A549 (cell line): ENCODE measurements at regions of chr17 and their contacts with region 1.

Region 1: GRCh38 chr17:81440876-81441244 is 45.6 kb downstream of the BAHCC1 start:
- DNase-seq: peak; percentile 63 to 87
- ATAC-seq: peak; percentile 49 to 83; a peak in 5 of 6 replicates
- H3K4me3 ChIP-seq: no peak overlapping the region
- H3K27ac ChIP-seq: 0 out of 6 replicates have a peak overlapping the region, but pooled peaks of 1 of the 2 experiments have one; percentile 20
- H3K4me1 ChIP-seq: 0 out of 3 replicates have a peak, but pooled peaks cover 4% of the 10 kb centered on the region
- CTCF ChIP-seq: peak; percentile 60
- EP300 ChIP-seq: no peak
- POLR2A ChIP-seq: no peak
- RAD21 ChIP-seq: peak; percentile 56 to 69; a peak in 4 of 5 replicates

Region 2: GRCh38 chr17:81253358-81254131 is 187.3 kb before region 1 on chr17:
- CTCF ChIA-PET with region 1: interaction called, 14 read pairs
- POLR2A ChIA-PET with region 1: no interaction called
- DNase-seq: peak; percentile 43 to 62
- ATAC-seq: peak; percentile 12 to 47; a peak in 3 of 6 replicates
- H3K4me3 ChIP-seq: no peak overlapping the region
- H3K27ac ChIP-seq: no peak overlapping the region
- H3K4me1 ChIP-seq: peaks cover 18% of the 10 kb centered on the region
- CTCF ChIP-seq: peak; percentile 92
- EP300 ChIP-seq: no peak
- POLR2A ChIP-seq: no peak
- RAD21 ChIP-seq: peak; percentile 95 to 98

Region 3: GRCh38 chr17:81371910-81372760 is 68.7 kb before region 1 on chr17:
- CTCF ChIA-PET with region 1: interaction called, 23 read pairs
- POLR2A ChIA-PET with region 1: no interaction called
- DNase-seq: peak; percentile 73 to 77
- ATAC-seq: peak; percentile 91 to 95
- H3K4me3 ChIP-seq: no peak overlapping the region
- H3K27ac ChIP-seq: peak overlapping the region; percentile 19 to 36; a peak in 2 of 6 replicates
- H3K4me1 ChIP-seq: peaks cover 5% of the 10 kb centered on the region
- CTCF ChIP-seq: peak; percentile 55
- EP300 ChIP-seq: no peak
- POLR2A ChIP-seq: no peak
- RAD21 ChIP-seq: peak; percentile 69 to 71; a peak in 4 of 5 replicates

Region 4: GRCh38 chr17:81401723-81402529 is 38.9 kb before region 1 on chr17:
- CTCF ChIA-PET with region 1: interaction called, 42 read pairs
- POLR2A ChIA-PET with region 1: no interaction called
- DNase-seq: peak; percentile 69 to 81
- ATAC-seq: peak in 1 of 2 experiments; percentile 54; a peak in 3 of 6 replicates
- H3K4me3 ChIP-seq: no peak overlapping the region
- H3K27ac ChIP-seq: peak overlapping the region; percentile 16 to 98; a peak in 3 of 6 replicates
- H3K4me1 ChIP-seq: peaks cover 49% of the 10 kb centered on the region
- CTCF ChIP-seq: peak; percentile 55
- EP300 ChIP-seq: no peak
- POLR2A ChIP-seq: no peak
- RAD21 ChIP-seq: peak; percentile 64 to 67

Region 5: DNA sequence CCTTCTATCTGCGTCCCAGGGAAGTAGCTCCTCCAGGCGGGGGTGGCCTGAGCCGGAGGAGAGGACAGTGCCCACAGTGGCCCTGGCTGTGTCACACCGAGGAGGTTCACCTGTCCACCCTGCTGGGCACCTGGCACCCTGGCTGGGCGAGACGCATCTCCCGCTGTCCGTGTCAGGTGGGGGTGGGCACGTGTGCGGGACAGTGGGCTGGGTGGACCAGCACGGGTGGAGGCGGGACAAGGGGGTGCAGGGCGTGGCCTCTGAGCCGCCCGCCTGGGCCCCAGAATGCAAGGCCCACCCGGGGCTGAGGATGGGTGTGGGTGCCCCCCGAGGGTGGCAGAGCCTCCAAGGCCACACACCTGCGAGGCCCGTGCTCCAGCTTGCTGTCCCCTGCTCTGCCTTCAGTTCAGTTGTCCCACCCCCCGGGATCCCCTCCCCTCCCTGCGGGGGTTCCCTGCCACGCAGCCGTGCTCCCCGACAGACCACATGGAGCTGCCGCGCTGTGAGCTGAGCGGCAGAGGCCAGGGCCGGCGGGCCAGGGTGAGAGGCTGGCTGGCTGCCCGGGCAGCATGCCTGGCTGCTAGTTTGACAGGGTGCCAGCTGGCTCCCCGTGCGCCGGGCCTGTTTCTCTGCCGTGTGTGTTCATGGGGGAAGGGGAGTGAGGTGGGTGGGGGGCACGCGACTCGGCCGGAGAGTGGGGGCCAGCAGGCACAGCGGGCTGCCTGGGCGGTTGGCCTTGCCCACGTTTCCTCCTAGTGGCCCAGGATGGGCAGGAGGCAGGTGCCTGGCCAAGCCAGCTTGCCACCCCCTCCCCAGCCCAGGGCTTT is 11.7 kb before region 1 on chr17:
- CTCF ChIA-PET with region 1: interaction called, 36 read pairs
- POLR2A ChIA-PET with region 1: no interaction called
- DNase-seq: peak; percentile 64 to 80
- ATAC-seq: peak; percentile 49 to 77
- H3K4me3 ChIP-seq: no peak overlapping the region
- H3K27ac ChIP-seq: peak overlapping the region; percentile 69 to 84
- H3K4me1 ChIP-seq: peaks cover 51% of the 10 kb centered on the region
- CTCF ChIP-seq: no peak
- EP300 ChIP-seq: peak in 1 of 2 experiments; percentile 22; a peak in 1 of 5 replicates
- POLR2A ChIP-seq: no peak
- RAD21 ChIP-seq: peak in 1 of 2 experiments; percentile 34; a peak in 1 of 5 replicates

Region 6: DNA sequence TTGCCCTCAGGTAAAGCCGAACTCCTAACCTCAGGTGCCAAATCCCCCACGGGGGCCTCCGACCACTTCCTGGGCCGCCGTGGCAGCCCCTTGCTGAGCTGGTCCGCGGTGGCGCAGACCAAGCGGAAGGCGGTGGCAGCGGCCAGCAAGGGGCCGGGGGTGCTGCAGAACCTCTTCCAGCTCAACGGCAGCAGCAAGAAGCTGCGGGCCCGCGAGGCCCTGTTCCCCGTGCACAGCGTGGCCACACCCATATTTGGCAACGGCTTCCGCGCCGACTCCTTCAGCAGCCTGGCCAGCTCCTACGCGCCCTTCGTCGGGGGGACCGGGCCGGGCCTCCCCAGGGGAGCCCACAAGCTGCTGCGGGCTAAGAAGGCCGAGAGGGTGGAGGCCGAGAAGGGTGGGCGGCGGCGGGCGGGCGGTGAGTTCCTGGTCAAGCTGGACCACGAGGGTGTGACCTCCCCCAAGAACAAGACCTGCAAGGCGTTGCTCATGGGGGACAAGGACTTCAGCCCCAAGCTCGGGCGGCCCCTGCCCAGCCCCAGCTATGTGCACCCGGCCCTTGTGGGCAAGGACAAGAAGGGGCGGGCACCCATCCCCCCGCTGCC is 20.1 kb after region 1 on chr17:
- CTCF ChIA-PET with region 1: interaction called, 27 read pairs
- POLR2A ChIA-PET with region 1: no interaction called
- DNase-seq: no peak
- ATAC-seq: no peak
- H3K4me3 ChIP-seq: no peak overlapping the region
- H3K27ac ChIP-seq: no peak overlapping the region
- H3K4me1 ChIP-seq: peaks cover 10% of the 10 kb centered on the region; the same call in 2 of the 3 replicates
- CTCF ChIP-seq: no peak
- EP300 ChIP-seq: no peak
- POLR2A ChIP-seq: no peak
- RAD21 ChIP-seq: no peak

Region 7: DNA sequence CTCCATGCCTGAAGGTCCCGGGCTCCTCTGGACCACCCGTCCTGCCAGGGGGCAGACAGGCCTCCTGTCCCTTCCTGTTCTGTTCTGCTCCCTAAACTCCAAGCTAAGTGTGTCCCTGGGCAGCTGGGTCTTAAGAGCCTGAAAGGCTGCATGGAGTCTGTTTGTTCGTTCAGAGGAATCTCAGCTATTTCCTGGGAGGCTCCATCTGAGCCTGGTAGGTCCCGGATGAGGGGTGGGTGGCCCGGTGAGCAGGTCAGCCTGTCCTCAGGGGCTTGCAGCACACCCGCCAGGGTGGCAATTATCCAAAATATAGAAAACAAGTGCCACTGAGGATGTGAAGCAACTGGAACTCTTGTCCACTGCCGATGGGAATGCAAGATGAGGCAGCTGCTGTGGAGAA is 59.2 kb after region 1 on chr17:
- CTCF ChIA-PET with region 1: no interaction called
- POLR2A ChIA-PET with region 1: no interaction called
- DNase-seq: peak in 1 of 2 experiments; percentile 57
- ATAC-seq: peak; percentile 11 to 47; a peak in 5 of 6 replicates
- H3K4me3 ChIP-seq: no peak overlapping the region
- H3K27ac ChIP-seq: peak overlapping the region; percentile 43 to 71; a peak in 5 of 6 replicates
- H3K4me1 ChIP-seq: peaks cover 14% of the 10 kb centered on the region
- CTCF ChIP-seq: no peak
- EP300 ChIP-seq: no peak
- POLR2A ChIP-seq: no peak
- RAD21 ChIP-seq: no peak